SK-N-SH (cell line): ENCODE measurements at regions of chr2 and their contacts with region 1.

Region 1: DNA sequence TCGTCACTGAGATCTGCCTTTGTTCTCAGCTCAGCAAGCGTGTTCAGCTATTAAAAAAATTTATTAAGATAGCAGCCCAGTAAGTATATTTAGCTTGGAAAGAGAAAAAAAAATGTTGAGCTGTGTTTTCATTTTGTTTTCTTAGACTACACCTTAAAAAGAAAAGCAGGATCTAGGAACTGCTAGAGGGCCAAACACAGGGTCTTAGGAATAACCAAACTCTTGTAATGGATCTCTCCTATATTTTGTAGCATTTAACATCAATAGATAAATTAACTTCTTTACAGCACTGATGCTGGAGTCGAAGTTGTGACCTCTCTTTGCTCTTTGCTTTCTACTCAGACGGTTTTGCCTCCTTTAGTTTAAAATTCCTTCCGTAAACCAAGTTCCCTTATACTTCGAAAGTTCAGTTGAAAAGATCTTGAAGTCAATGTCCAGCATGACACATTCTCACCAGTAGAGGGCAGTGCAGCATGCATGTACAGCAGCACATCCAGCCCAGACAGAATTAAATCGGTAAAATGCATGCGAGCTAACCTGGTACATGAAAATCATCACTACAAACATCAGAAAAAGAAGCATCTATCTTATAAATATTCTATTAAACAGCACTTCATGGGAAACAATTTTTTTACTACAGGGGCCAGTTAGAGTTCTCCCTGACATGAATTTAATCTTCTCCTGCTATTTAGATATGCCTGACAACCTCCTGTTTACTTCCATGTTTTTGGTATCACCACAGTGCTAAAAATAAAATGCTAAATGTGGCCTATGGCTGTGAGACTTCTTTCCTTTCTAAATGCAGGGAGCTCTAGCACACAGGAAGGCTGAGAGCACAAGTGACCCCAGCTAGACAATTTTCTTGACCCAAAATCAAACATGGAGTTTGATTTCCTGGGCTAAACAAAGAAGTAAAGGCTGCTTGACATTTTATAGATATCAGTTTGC is 48.2 kb upstream of the MAP3K20 start:
- DNase-seq: peak; percentile 70
- H3K4me3 ChIP-seq: peak overlapping the region in 1 of 2 experiments; percentile 12; a peak in 1 of 4 replicates
- H3K27ac ChIP-seq: peak overlapping the region in 1 of 2 experiments; percentile 14; a peak in 2 of 4 replicates
- H3K4me1 ChIP-seq: peaks cover 2 to 6% of the 10 kb centered on the region in 2 experiments; a peak in 2 of 4 replicates
- H3K27me3 ChIP-seq: no peaks in the 10 kb centered on the region
- CTCF ChIP-seq: peak; percentile 98
- EP300 ChIP-seq: no peak
- RAD21 ChIP-seq: peak; percentile 98

Region 2: DNA sequence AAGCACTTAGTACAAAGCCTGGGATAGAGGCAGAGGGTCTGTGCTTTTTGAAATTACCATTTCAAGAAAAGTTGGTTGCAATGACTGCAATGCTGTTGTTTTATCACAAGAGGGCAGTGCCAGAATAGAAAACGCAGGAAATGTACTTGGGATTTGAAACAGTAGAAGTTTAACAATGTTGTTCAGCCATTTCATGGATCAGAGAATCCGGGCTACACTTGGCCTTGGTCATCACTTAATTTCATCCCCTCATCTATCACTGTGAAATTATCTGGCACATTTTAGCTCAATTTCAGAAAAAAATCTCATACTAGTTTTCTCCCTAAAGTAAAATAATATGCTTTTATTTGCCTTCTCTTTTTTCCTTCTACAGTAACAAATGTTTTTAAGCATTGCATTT is 221.0 kb before region 1 on chr2:
- CTCF ChIA-PET with region 1: interaction called, 41 read pairs
- POLR2A ChIA-PET with region 1: no interaction called
- DNase-seq: peak; percentile 50
- H3K4me3 ChIP-seq: peak overlapping the region in 1 of 2 experiments; percentile 46; a peak in 1 of 4 replicates
- H3K27ac ChIP-seq: peak overlapping the region in 1 of 2 experiments; percentile 53; a peak in 2 of 4 replicates
- H3K4me1 ChIP-seq: peaks cover 0 to 20% of the 10 kb centered on the region in 2 experiments; a peak in 2 of 4 replicates
- H3K27me3 ChIP-seq: no peaks in the 10 kb centered on the region
- CTCF ChIP-seq: peak; percentile 95
- EP300 ChIP-seq: no peak
- RAD21 ChIP-seq: peak; percentile 99

Region 3: DNA sequence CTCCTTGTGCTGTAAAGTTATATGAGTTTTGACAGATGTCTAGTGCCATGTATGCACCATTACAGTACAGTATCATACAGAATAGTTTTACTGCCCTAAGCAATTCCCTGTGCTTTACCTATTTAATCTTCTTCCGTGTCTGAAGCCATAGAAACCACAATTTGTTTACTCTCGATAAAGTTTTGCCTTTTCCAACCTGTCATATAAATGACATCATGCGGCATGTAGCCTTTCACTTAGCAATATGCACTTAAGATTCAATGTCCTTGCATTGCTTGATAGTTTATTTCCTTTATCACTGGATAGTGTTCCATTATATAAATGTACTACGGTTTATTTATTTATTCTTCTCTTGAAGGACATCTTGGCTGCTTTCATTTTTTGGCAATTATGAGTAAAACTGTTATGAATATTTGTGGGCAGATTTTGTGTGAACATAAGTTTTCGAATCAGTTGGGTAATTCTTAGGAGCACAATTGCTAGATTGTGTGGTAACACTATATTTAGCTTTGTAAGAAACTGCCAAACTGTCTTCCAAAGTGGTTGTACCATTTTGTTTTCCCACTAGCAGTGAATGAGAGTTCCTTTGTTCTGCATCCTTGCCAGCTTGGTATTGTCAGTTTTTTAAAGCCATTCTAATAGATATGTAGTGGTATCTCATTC is 88.6 kb before region 1 on chr2:
- CTCF ChIA-PET with region 1: no interaction called
- POLR2A ChIA-PET with region 1: no interaction called
- DNase-seq: no peak
- H3K4me3 ChIP-seq: no peak overlapping the region
- H3K27ac ChIP-seq: no peak overlapping the region
- H3K4me1 ChIP-seq: no peaks in the 10 kb centered on the region
- H3K27me3 ChIP-seq: no peaks in the 10 kb centered on the region
- CTCF ChIP-seq: no peak
- EP300 ChIP-seq: no peak
- RAD21 ChIP-seq: no peak

Region 4: DNA sequence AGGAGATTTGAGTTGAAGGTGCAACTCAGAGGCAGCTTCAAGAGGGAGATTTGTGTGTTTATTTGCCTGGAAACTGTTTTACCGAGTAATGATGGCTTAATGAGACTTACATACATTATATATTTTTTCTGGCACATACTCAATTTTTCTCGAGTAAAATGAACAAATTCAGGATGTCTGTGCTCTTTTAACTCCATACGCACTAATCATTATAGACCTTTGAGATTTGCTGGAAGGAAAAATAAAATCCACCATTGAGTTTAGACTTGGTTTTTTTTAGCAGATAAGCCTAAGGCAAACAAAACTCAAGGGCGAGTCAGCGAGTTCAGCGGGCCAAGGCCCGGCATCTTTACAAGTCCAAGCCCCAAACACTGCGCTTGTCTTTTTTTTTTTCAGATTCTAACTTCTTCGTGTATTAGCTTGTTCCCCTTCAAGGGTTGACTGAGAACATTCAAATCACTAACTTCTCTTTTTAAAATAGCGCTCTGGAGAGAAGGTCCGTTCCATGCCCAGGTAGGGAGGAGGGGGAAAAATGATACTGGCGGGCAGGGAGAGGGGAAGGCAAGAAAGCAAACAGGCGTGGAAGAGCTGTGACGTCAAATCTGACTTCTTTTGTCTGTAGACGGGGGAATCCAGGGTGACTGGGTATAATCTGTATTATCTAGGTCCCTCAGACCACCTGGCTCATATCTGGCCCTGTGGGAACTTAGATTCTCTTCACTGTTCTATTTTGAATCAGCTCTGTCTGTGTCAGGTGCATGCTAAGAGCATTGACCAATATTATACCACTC is 24.5 kb before region 1 on chr2:
- CTCF ChIA-PET with region 1: interaction called, 12 read pairs
- POLR2A ChIA-PET with region 1: no interaction called
- DNase-seq: no peak
- H3K4me3 ChIP-seq: no peak overlapping the region
- H3K27ac ChIP-seq: peak overlapping the region in 1 of 2 experiments; percentile 50; a peak in 1 of 4 replicates
- H3K4me1 ChIP-seq: peaks cover 0 to 2% of the 10 kb centered on the region in 2 experiments; a peak in 2 of 4 replicates
- H3K27me3 ChIP-seq: no peaks in the 10 kb centered on the region
- CTCF ChIP-seq: no peak
- EP300 ChIP-seq: no peak
- RAD21 ChIP-seq: no peak

Region 5: GRCh38 chr2:173058673-173059072 is 31.2 kb after region 1 on chr2:
- CTCF ChIA-PET with region 1: interaction called, 10 read pairs
- POLR2A ChIA-PET with region 1: no interaction called
- DNase-seq: no peak
- H3K4me3 ChIP-seq: no peak overlapping the region
- H3K27ac ChIP-seq: no peak overlapping the region
- H3K4me1 ChIP-seq: peaks cover 0 to 7% of the 10 kb centered on the region in 2 experiments; a peak in 2 of 4 replicates
- H3K27me3 ChIP-seq: no peaks in the 10 kb centered on the region
- CTCF ChIP-seq: no peak
- EP300 ChIP-seq: no peak
- RAD21 ChIP-seq: no peak

Region 6: GRCh38 chr2:173204316-173204715 is 176.9 kb after region 1 on chr2:
- CTCF ChIA-PET with region 1: interaction called, 256 read pairs
- POLR2A ChIA-PET with region 1: no interaction called
- DNase-seq: peak; percentile 43
- H3K4me3 ChIP-seq: no peak overlapping the region
- H3K27ac ChIP-seq: peak overlapping the region in 1 of 2 experiments; percentile 79; a peak in 2 of 4 replicates
- H3K4me1 ChIP-seq: peaks cover 0 to 5% of the 10 kb centered on the region in 2 experiments; a peak in 2 of 4 replicates
- H3K27me3 ChIP-seq: no peaks in the 10 kb centered on the region
- CTCF ChIP-seq: no peak
- EP300 ChIP-seq: peak in 1 of 2 experiments; percentile 70; a peak in 2 of 4 replicates
- RAD21 ChIP-seq: no peak

Region 7: GRCh38 chr2:173402405-173402974 is 375.0 kb after region 1 on chr2:
- CTCF ChIA-PET with region 1: interaction called, 13 read pairs
- POLR2A ChIA-PET with region 1: no interaction called
- DNase-seq: peak; percentile 83
- H3K4me3 ChIP-seq: peak overlapping the region; percentile 29 to 55; a peak in 3 of 4 replicates
- H3K27ac ChIP-seq: no peak overlapping the region
- H3K4me1 ChIP-seq: peaks cover 0 to 7% of the 10 kb centered on the region in 2 experiments; a peak in 1 of 4 replicates
- H3K27me3 ChIP-seq: peaks cover 35% of the 10 kb centered on the region
- CTCF ChIP-seq: peak; percentile 89
- EP300 ChIP-seq: no peak
- RAD21 ChIP-seq: peak; percentile 97

Region 8: DNA sequence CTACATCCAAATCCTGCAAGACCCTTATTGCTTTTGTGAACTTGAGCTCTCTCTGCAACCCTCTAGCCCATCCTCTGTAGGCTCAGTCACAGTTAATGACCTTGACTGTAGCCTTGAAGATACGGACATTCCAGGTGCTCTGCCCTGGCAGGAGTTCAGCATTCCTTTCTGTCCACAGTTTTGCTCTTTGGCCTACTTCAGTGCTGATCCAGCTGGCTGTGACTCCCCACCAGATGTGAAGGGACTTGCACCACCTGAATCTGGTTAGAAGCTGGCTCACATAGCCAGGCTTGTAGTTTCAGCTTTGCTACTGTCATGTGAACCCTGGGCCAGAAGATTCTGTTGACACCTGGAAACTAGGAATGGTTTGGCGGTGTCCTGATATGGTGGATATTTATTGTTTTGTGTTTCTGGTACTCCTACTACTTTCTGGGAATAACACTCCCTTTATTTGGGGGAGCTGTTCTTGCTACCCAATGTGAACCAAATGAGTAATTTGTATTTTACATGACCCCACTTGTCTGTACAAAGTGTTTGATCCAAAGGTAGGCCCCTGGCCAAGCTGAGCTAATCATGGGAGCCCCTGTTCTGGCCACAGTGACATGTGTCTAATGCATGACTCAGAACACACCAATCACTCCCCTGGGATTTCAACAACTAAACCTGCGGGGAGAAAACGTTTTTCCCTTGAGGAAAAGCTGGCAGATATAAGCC is 400.6 kb after region 1 on chr2:
- CTCF ChIA-PET with region 1: no interaction called
- POLR2A ChIA-PET with region 1: no interaction called
- DNase-seq: no peak
- H3K4me3 ChIP-seq: no peak overlapping the region
- H3K27ac ChIP-seq: no peak overlapping the region
- H3K4me1 ChIP-seq: no peaks in the 10 kb centered on the region; a peak in 1 of 4 replicates
- H3K27me3 ChIP-seq: no peaks in the 10 kb centered on the region; the same call in 1 of the 2 replicates
- CTCF ChIP-seq: no peak
- EP300 ChIP-seq: no peak
- RAD21 ChIP-seq: no peak